WTC11 (cell line): ENCODE measurements at regions of chr13 and their contacts with region 1.

Region 1: DNA sequence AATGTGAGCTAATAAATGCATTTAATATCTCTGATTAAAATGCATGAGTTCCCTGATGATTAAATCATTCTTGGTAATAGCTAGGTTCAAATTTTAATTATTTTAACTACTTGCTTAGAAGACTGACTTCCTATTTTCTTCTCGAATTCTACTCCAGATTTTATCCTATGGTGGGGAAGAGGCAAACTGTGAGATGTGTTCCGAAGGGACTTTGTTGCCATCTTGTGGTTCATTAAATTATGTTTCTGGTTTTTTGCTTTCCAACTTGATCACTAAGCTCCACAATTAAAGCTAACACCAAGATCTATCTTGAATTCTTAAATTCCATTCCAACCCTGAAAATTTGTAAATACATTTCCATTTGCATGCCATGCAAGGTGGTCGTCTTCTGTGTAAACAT is 538.4 kb upstream of the PCDH20 start:
- DNase-seq: no peak
- ATAC-seq: peak; percentile 53
- H3K4me3 Mint-ChIP-seq: no peak overlapping the region
- H3K27ac Mint-ChIP-seq: peak overlapping the region; percentile 49; the same call in 1 of the 2 replicates
- H3K4me1 Mint-ChIP-seq: no peaks in the 10 kb centered on the region
- H3K27me3 Mint-ChIP-seq: no peaks in the 10 kb centered on the region
- CTCF ChIP-seq: no peak

Region 2: DNA sequence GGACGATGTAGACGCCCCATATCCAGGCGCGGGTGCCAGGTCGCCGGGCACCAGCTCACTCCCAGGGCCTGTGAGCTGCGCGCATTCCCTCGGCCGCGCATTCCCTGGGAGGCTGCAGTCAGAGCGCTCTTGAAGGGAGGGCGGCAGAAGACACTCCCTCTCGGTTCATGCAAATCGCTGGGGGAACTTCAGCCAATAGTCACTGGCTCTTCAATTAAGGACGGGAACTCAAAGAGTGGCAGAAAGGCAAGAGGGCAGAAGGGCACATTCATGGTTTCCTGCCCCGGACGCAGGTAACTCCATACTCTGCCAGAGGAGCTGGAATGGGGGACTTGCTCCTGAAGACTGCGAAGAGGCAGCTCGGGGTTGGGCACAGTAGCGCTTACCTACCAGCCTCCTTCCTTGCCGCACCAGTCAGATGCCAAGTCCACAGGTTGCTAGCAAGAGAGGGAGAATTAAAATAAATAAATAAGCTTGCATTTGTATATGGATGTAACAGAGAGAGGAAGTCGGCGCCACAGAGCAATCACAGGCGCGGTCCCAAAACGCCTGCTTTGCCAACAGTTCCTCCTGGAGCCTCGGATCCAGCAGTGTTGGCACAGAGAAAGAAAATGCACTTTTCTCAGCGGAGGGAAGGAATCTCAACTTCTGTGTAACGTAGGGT is 538.9 kb before region 1 on chr13:
- CTCF ChIA-PET with region 1: interaction called, 10 read pairs
- POLR2A ChIA-PET with region 1: no interaction called
- DNase-seq: peak; percentile 81
- ATAC-seq: peak; percentile 98
- H3K4me3 Mint-ChIP-seq: peak overlapping the region; percentile 92
- H3K27ac Mint-ChIP-seq: peak overlapping the region; percentile 68; the same call in 1 of the 2 replicates
- H3K4me1 Mint-ChIP-seq: peaks cover 22% of the 10 kb centered on the region
- H3K27me3 Mint-ChIP-seq: peaks cover 47% of the 10 kb centered on the region
- CTCF ChIP-seq: no peak

Region 3: GRCh38 chr13:61880578-61881283 is 73.4 kb before region 1 on chr13:
- CTCF ChIA-PET with region 1: interaction called, 12 read pairs
- POLR2A ChIA-PET with region 1: no interaction called
- DNase-seq: peak; percentile 44
- ATAC-seq: peak; percentile 98
- H3K4me3 Mint-ChIP-seq: no peak overlapping the region
- H3K27ac Mint-ChIP-seq: no peak overlapping the region
- H3K4me1 Mint-ChIP-seq: peaks cover 3% of the 10 kb centered on the region; the same call in 1 of the 2 replicates
- H3K27me3 Mint-ChIP-seq: no peaks in the 10 kb centered on the region; the same call in 1 of the 2 replicates
- CTCF ChIP-seq: peak; percentile 56

Region 4: DNA sequence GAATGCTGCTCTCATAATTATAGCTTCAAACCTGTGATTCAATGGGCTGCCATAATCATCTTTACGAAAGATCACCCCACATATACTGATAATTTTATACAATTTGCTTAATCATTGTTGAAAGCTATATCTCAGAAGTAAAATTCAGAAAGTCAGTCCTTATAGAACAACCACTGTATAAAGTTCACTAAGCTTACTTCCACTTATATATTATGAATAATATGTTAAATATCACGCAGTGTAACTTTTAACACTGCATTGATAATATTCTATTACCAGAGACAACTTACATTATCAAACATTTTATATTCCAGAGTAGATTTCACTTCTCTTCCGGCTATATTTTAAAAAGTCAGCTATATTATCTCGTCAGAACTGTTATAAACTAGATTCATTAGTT is 11.7 kb after region 1 on chr13:
- CTCF ChIA-PET with region 1: no interaction called
- POLR2A ChIA-PET with region 1: no interaction called
- DNase-seq: no peak
- ATAC-seq: no peak
- H3K4me3 Mint-ChIP-seq: no peak overlapping the region
- H3K27ac Mint-ChIP-seq: no peak overlapping the region
- H3K4me1 Mint-ChIP-seq: no peaks in the 10 kb centered on the region
- H3K27me3 Mint-ChIP-seq: no peaks in the 10 kb centered on the region
- CTCF ChIP-seq: no peak